ENCODE measurements at regions of chr17 and their contacts with region 1.

Region 1: GRCh38 chr17:10115071-10115539 is 83.3 kb downstream of the GAS7 start:
- DNase-seq: peak; percentile 61
- H3K4me3 Mint-ChIP-seq: peak overlapping the region; percentile 49
- H3K27ac Mint-ChIP-seq: peak overlapping the region; percentile 71
- H3K4me1 Mint-ChIP-seq: peaks cover 22% of the 10 kb centered on the region
- H3K27me3 Mint-ChIP-seq: no peaks in the 10 kb centered on the region
- CTCF ChIP-seq: no peak

Region 2: GRCh38 chr17:9971991-9972599 is 143.0 kb before region 1 on chr17:
- CTCF ChIA-PET with region 1: interaction called, 4 read pairs
- intact Hi-C with region 1: loop called (anchors 10 kb)
- DNase-seq: peak; percentile 37
- H3K4me3 Mint-ChIP-seq: no peak overlapping the region
- H3K27ac Mint-ChIP-seq: no peak overlapping the region
- H3K4me1 Mint-ChIP-seq: no peaks in the 10 kb centered on the region
- H3K27me3 Mint-ChIP-seq: peaks cover 50% of the 10 kb centered on the region
- CTCF ChIP-seq: no peak

Region 3: GRCh38 chr17:10226930-10227685 is 112.0 kb after region 1 on chr17:
- CTCF ChIA-PET with region 1: no interaction called
- intact Hi-C with region 1: loop called (anchors 10 kb)
- DNase-seq: peak; percentile 54
- H3K4me3 Mint-ChIP-seq: no peak overlapping the region
- H3K27ac Mint-ChIP-seq: no peak overlapping the region
- H3K4me1 Mint-ChIP-seq: no peaks in the 10 kb centered on the region
- H3K27me3 Mint-ChIP-seq: no peaks in the 10 kb centered on the region
- CTCF ChIP-seq: peak; percentile 64